Pancreas (tissue), 10 donors: ENCODE measurements at regions of chr4 and their contacts with region 1.

Region 1: GRCh38 chr4:24980064-24980690 is 50.6 kb downstream of the LGI2 start:
- DNase-seq: peak in 3 of 6 donors; percentile 33 to 58 (median 39)
- ATAC-seq: peak; percentile 80 to 91 (median 86)
- H3K4me3 ChIP-seq: peak overlapping the region in 1 of 4 donors; percentile 13
- H3K27ac ChIP-seq: peak overlapping the region in 2 of 4 donors; percentile 39 to 51
- H3K4me1 ChIP-seq: no peaks in the 10 kb centered on the region
- H3K27me3 ChIP-seq: no peaks in the 10 kb centered on the region
- CTCF ChIP-seq: peak; percentile 77 to 84 (median 82)

Region 2: DNA sequence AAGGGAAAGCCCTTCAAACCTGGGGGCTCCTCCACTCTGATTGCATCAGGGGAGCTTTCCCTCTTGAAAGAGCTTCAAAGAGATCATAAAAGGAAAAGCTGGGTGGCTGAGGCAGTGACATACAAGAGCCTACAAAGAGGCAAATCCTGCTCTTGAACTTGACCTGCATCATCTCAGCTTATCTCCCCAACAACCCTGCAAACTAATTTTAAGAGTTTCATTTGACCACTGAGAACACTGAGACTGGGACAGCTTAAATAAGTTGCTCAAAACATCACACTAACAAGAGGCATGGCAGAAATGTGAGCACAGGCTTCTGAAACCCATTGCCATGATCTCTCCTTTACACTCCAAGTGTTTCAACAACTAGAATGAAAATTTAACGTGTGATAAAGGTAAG is 988.7 kb before region 1 on chr4:
- intact Hi-C with region 1: no loop called
- DNase-seq: no peak
- ATAC-seq: no peak
- H3K4me3 ChIP-seq: no peak overlapping the region
- H3K27ac ChIP-seq: no peak overlapping the region
- H3K4me1 ChIP-seq: no peaks in the 10 kb centered on the region
- H3K27me3 ChIP-seq: no peaks in the 10 kb centered on the region
- CTCF ChIP-seq: no peak

Region 3: DNA sequence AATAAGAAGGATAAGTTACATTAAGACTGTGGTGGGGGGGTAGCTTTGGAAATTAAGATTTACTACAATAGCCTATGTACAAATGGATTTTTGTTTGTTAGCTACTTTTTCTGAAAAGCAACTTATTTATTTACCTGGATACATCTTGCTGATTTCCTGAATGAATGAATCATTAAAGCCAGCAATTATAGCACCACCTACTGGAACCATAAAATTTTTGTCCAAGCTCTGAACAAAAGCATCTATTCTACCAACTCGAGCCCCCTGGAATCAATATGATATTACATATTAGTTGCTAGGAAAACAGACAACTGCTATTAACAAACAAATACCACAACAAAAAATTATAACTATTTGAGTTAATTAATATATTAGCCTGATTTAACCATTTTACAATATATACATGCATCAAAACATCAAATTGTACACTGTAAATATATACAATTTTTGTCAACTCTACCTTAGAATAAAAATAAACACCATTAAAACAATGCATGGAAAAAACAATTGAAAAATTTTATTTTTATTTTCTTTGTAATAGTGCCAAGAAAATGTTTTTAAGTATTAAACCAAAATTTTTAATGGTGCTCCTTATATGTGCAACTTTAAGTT is 164.8 kb after region 1 on chr4:
- intact Hi-C with region 1: loop called in 2 of 3 experiments (anchors 10 kb)
- DNase-seq: no peak
- ATAC-seq: peak in 3 of 4 donors; percentile 55 to 60 (median 55)
- H3K4me3 ChIP-seq: no peak overlapping the region
- H3K27ac ChIP-seq: no peak overlapping the region
- H3K4me1 ChIP-seq: peaks cover 0 to 9% (median 0%) of the 10 kb centered on the region in 3 donors
- H3K27me3 ChIP-seq: no peaks in the 10 kb centered on the region
- CTCF ChIP-seq: peak in 3 of 4 donors; percentile 19 to 30 (median 27)